Activated B cell treated with CpG ODN at 0.5 μM for 24 hours (primary cell): ENCODE measurements at regions of chr15 and their contacts with region 1.

Region 1: DNA sequence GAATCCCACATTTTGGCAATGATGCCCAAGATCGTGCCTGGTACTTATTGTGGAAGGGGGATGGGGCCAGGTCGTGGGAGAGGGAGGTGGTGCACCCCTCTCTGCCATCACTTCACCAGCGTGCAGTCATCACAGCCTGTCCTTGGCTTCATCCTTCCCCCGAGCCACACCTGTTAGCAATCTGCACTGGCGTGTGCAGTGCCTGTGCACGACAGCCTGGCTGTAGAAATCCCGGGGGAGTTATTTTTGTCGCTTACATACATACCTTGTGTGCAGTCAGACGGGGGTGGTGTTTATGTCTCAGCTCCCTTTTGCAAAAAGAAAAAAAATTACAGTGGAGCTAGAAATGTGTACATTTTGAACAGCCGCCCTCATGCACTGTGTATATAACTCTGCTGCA is 216.0 kb downstream of the TLE3 start:
- DNase-seq: peak; percentile 54
- ATAC-seq: peak; percentile 94
- H3K4me3 Mint-ChIP-seq: peak overlapping the region; percentile 73
- H3K27ac Mint-ChIP-seq: peak overlapping the region; percentile 82
- H3K4me1 Mint-ChIP-seq: peaks cover 36% of the 10 kb centered on the region
- H3K27me3 Mint-ChIP-seq: peaks cover 3% of the 10 kb centered on the region
- CTCF ChIP-seq: no peak

Region 2: GRCh38 chr15:69755551-69756310 is 126.0 kb before region 1 on chr15:
- CTCF ChIA-PET with region 1: no interaction called
- POLR2A ChIA-PET with region 1: interaction called, 32 read pairs
- intact Hi-C with region 1: loop called (anchors 1 kb)
- DNase-seq: peak; percentile 63
- ATAC-seq: peak; percentile 84
- H3K4me3 Mint-ChIP-seq: peak overlapping the region; percentile 71
- H3K27ac Mint-ChIP-seq: peak overlapping the region; percentile 89
- H3K4me1 Mint-ChIP-seq: peaks cover 72% of the 10 kb centered on the region
- H3K27me3 Mint-ChIP-seq: no peaks in the 10 kb centered on the region
- CTCF ChIP-seq: no peak

Region 3: GRCh38 chr15:69853581-69853980 is 28.2 kb before region 1 on chr15:
- CTCF ChIA-PET with region 1: no interaction called
- POLR2A ChIA-PET with region 1: no interaction called
- intact Hi-C with region 1: no loop called
- DNase-seq: no peak
- ATAC-seq: no peak
- H3K4me3 Mint-ChIP-seq: no peak overlapping the region
- H3K27ac Mint-ChIP-seq: no peak overlapping the region
- H3K4me1 Mint-ChIP-seq: peaks cover 15% of the 10 kb centered on the region
- H3K27me3 Mint-ChIP-seq: no peaks in the 10 kb centered on the region
- CTCF ChIP-seq: no peak

Region 4: GRCh38 chr15:69958494-69959084 is 76.8 kb after region 1 on chr15:
- CTCF ChIA-PET with region 1: no interaction called
- POLR2A ChIA-PET with region 1: no interaction called
- intact Hi-C with region 1: loop called (anchors 5 kb)
- DNase-seq: no peak
- ATAC-seq: peak; percentile 31
- H3K4me3 Mint-ChIP-seq: no peak overlapping the region
- H3K27ac Mint-ChIP-seq: no peak overlapping the region
- H3K4me1 Mint-ChIP-seq: peaks cover 7% of the 10 kb centered on the region
- H3K27me3 Mint-ChIP-seq: peaks cover 11% of the 10 kb centered on the region
- CTCF ChIP-seq: no peak

Region 5: DNA sequence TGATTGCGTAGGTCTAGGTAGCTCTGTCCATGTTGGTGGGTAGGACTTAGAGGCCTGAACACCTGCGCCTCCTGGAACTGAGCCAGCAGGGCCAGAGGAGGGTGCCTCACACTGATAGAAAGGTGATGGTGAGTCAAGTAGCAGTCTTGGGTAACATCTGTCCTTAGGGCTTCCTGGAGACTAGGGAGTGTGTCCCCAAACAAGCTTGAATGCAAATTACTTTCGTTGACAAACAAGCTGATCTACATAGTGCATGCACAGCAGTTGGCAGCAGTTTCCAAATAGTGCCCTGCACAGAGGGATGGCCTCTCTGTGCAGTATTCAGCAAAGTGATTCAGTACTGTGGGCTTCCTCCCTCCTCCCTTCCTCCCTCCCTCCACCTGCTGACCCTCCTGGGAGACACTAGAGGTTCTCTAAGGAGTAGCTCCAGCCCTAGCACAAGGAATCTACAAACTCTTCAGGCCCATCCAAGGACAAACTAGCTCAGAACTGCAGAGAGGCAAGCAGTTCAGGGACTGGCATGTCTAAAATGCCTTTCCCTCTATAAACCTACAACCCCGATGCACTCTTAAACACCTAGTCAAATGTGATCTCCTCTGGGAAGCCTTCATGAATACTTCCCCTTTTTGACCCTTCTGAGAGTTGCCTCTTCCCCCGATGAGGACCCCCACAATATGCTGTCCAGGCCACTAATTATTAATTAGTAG is 155.0 kb after region 1 on chr15:
- CTCF ChIA-PET with region 1: no interaction called
- POLR2A ChIA-PET with region 1: interaction called, 10 read pairs
- intact Hi-C with region 1: loop called (anchors 1 kb)
- DNase-seq: no peak
- ATAC-seq: peak; percentile 55
- H3K4me3 Mint-ChIP-seq: peak overlapping the region; percentile 76
- H3K27ac Mint-ChIP-seq: peak overlapping the region; percentile 91
- H3K4me1 Mint-ChIP-seq: peaks cover 67% of the 10 kb centered on the region
- H3K27me3 Mint-ChIP-seq: no peaks in the 10 kb centered on the region
- CTCF ChIP-seq: no peak

Region 6: DNA sequence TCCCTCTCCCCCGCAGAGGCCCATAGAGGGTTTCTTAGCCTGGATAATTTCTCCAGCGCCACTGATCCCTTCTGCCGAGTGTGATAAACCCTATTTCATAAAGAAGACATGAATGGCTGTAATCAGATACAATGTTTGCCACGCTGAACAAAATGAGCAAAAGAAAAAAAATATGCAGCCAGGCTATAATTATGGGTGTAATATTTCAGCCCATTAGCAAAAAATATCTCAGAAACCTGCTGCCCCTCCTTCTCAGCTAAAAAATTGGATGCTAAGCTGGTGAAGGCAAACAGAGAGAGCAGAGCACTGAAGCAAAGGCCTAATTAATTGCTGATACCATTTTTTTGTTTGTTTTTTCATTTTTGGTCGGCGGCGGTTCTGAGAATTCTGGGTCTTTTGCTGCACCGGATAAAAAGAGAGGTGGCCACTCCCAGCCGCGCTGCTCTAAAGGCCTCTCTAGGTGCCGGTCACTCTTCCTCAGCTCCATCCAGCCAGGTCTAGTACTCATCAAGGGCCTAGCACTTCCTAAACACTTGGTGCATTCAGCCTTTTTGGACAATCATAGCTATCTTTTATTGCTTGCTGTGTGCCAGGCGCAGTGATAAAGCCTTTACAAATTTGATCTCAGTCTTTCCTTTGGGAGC is 344.7 kb after region 1 on chr15:
- CTCF ChIA-PET with region 1: no interaction called
- POLR2A ChIA-PET with region 1: no interaction called
- intact Hi-C with region 1: no loop called
- DNase-seq: no peak
- ATAC-seq: no peak
- H3K4me3 Mint-ChIP-seq: no peak overlapping the region
- H3K27ac Mint-ChIP-seq: no peak overlapping the region
- H3K4me1 Mint-ChIP-seq: peaks cover 6% of the 10 kb centered on the region
- H3K27me3 Mint-ChIP-seq: no peaks in the 10 kb centered on the region
- CTCF ChIP-seq: no peak

Region 7: DNA sequence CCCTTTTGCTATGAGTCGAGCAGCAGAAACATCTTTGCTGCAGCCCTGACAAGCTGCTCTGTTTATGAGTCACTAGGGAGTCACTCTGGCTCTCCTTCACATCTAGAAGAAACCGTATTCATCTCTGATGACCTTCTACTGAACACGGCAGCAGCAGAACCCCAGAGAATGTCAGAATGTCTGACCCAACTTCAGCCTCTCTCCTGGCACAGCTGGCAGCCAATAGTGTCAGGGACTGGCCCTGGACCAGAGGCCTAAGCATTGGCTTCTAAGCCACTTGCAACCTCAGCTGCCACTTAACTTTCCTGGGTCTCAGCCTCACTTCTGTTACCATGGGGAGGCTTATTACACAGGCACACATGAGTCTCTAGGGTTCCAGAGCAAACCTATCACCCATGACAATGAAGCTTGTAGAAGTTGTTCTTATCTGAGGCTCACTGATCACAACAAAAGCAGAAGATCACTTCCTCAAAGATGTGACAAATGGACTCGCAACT is 400.1 kb after region 1 on chr15:
- CTCF ChIA-PET with region 1: no interaction called
- POLR2A ChIA-PET with region 1: no interaction called
- intact Hi-C with region 1: loop called (anchors 5 kb)
- DNase-seq: peak; percentile 53
- ATAC-seq: peak; percentile 88
- H3K4me3 Mint-ChIP-seq: peak overlapping the region; percentile 33
- H3K27ac Mint-ChIP-seq: peak overlapping the region; percentile 94
- H3K4me1 Mint-ChIP-seq: peaks cover 55% of the 10 kb centered on the region
- H3K27me3 Mint-ChIP-seq: no peaks in the 10 kb centered on the region
- CTCF ChIP-seq: no peak